ENCODE measurements at regions of chr2 and their contacts with region 1.

Region 1: GRCh38 chr2:188997263-188997662 is 23.1 kb downstream of the COL3A1 start:
- DNase-seq: no peak
- ATAC-seq: peak in 1 of 8 donors; percentile 50
- H3K4me3 ChIP-seq: no peak overlapping the region
- H3K27ac ChIP-seq: no peak overlapping the region
- H3K4me1 ChIP-seq: no peaks in the 10 kb centered on the region
- H3K27me3 ChIP-seq: no peaks in the 10 kb centered on the region
- CTCF ChIP-seq: no peak

Region 2: DNA sequence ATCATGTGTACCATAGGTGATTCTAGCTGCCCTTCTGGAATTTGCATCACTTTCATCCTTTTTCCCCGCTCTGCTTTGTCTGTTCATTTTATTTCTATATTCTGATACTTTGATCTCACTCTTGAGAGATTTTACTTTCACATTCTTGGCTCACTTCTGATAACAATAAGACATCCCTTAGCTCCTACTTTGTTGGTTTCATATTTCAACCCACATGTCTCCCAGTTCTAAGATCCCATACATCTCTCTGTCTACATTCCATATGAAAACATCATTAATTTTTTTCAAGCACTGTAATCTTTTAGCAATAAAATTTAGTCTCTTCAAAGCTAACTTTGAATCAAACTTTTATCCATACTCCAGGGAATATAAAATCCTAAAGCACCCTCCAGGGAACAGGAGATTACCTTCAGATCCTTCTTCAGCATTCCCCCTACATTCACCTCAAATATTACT is 52.5 kb after region 1 on chr2:
- intact Hi-C with region 1: loop called in 1 of 10 experiments (anchors 10 kb)
- DNase-seq: no peak
- ATAC-seq: no peak
- H3K4me3 ChIP-seq: no peak overlapping the region
- H3K27ac ChIP-seq: no peak overlapping the region
- H3K4me1 ChIP-seq: no peaks in the 10 kb centered on the region
- H3K27me3 ChIP-seq: no peaks in the 10 kb centered on the region
- CTCF ChIP-seq: no peak